PC-3 (cell line): ENCODE measurements at regions of chr2 and their contacts with region 1.

Region 1: DNA sequence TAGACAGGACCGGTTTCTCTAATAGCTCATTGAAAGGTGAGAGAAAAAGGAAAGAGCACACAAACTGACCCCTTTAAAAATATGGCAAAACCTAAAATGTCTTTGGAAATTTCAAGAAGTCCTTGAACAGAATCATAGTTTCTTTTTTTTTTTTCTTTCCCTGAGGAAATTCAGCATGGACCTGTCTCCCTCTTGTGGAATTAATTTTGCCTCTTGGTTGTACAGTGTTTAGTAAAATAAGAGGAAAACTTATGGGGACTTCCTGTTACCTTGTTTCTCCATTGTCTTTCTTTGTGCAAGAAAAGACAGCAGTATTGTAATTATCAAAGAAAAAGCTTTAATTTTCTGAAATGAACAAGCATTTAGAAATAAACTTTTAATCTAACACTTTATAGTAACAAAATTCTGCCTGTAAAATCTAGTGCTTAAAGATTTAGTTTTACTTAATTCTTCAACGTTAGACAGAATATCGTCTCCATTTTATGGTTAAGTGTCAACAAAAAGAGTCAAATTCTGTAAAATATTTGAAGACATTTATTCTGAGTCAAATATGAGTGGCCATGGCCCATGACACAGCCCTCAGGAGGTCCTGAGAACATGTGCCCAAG is 176.3 kb upstream of the NABP1 start:
- DNase-seq: peak; percentile 70
- ATAC-seq: peak; percentile 54
- H3K4me3 ChIP-seq: no peak overlapping the region
- H3K27ac ChIP-seq: no peak overlapping the region
- H3K4me1 ChIP-seq: peaks cover 10% of the 10 kb centered on the region
- H3K27me3 ChIP-seq: no peaks in the 10 kb centered on the region
- CTCF ChIP-seq: peak; percentile 84

Region 2: DNA sequence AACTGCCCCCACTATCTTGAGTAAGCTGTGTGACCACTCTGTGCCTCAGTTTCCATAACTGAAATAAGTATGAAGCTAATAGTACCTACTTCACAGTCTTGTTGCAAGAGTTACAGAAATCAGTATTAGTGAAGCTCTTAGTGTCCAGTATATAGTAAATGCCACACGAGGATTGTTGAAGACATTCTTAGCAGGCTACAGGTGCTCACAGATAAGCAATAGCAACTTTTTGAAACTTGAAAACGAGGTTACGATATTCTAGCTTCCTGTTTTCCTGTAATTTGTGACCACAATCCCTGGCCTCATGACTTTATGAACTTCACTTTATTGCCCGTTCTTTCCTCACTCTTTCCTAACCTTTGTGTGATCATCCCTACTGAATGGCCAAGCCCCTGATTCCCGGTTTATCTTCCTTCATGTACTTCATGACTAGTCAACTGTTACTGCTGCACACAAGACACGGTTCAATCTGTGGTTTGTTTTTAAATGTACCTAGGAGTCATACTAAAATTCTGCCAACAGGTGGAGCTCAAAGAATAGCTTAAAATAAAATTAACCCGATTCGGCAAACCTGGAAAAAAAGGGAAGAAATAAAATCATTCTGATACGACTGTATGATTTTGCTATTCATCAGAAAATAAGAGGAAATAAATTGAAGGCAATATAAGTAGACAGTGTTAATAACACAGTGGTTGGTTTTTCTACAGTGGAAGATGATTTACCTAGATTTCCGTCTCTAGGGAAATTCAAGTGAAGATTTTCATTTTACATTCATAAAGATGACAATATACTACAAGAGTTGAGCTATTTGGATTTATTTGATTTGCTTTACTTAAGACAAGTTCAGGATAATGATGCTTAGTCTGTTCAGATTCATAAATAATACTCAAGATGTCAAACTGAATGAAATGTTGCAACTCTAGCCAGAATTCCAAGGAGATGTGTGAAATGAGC is 449.6 kb before region 1 on chr2:
- CTCF ChIA-PET with region 1: no interaction called
- POLR2A ChIA-PET with region 1: no interaction called
- intact Hi-C with region 1: loop called (anchors 5 kb)
- DNase-seq: peak; percentile 79
- ATAC-seq: peak; percentile 49
- H3K4me3 ChIP-seq: no peak overlapping the region
- H3K27ac ChIP-seq: no peak overlapping the region
- H3K4me1 ChIP-seq: peaks cover 7% of the 10 kb centered on the region
- H3K27me3 ChIP-seq: no peaks in the 10 kb centered on the region
- CTCF ChIP-seq: peak; percentile 83

Region 3: DNA sequence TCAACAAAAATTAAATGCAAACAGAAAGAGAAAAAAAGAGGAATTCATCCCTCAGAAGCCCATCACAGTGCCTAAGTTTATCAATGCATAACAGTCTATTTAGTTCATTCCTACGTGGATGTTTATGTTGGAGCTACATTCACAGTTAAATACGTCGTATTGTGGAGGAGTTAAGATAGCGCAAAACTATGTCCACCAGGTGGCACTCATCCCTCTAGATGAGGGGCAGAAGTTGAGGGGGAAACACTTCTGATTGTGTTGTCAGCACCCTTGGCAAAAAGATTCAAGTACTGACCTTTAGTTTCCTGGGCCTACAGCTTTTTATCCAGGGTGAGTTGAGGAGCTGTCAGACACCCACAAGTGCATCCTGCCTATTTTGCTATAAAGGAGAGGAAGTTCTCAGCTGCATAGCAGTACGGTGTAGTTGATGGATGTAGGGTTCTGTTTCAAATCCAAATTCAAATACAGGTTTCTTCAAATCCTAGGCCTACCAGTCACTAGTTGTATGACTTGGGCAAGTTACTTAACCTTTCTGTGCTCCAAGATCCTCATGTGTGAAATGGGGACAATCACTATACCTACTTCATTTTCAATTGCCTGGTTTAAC is 283.3 kb before region 1 on chr2:
- CTCF ChIA-PET with region 1: no interaction called
- POLR2A ChIA-PET with region 1: interaction called, 6 read pairs
- intact Hi-C with region 1: loop called (anchors 1 kb)
- DNase-seq: peak; percentile 85
- ATAC-seq: peak; percentile 17; the same call in 1 of the 2 replicates
- H3K4me3 ChIP-seq: peak overlapping the region; percentile 15; the same call in 1 of the 2 replicates
- H3K27ac ChIP-seq: peak overlapping the region; percentile 84
- H3K4me1 ChIP-seq: peaks cover 49% of the 10 kb centered on the region
- H3K27me3 ChIP-seq: no peaks in the 10 kb centered on the region
- CTCF ChIP-seq: peak; percentile 88

Region 4: GRCh38 chr2:191299010-191299409 is 202.7 kb before region 1 on chr2:
- CTCF ChIA-PET with region 1: no interaction called
- POLR2A ChIA-PET with region 1: no interaction called
- intact Hi-C with region 1: loop called (anchors 5 kb)
- DNase-seq: no peak
- ATAC-seq: no peak
- H3K4me3 ChIP-seq: no peak overlapping the region
- H3K27ac ChIP-seq: no peak overlapping the region
- H3K4me1 ChIP-seq: peaks cover 17% of the 10 kb centered on the region
- H3K27me3 ChIP-seq: no peaks in the 10 kb centered on the region
- CTCF ChIP-seq: peak; percentile 36; the same call in 1 of the 2 replicates

Region 5: GRCh38 chr2:191404554-191404991 is 97.1 kb before region 1 on chr2:
- CTCF ChIA-PET with region 1: no interaction called
- POLR2A ChIA-PET with region 1: no interaction called
- intact Hi-C with region 1: loop called (anchors 1 kb)
- DNase-seq: peak; percentile 90
- ATAC-seq: peak; percentile 92
- H3K4me3 ChIP-seq: no peak overlapping the region
- H3K27ac ChIP-seq: peak overlapping the region; percentile 39
- H3K4me1 ChIP-seq: peaks cover 28% of the 10 kb centered on the region
- H3K27me3 ChIP-seq: no peaks in the 10 kb centered on the region
- CTCF ChIP-seq: no peak